T-cell (primary cell): ENCODE measurements at regions of chr2 and their contacts with region 1.

Region 1: DNA sequence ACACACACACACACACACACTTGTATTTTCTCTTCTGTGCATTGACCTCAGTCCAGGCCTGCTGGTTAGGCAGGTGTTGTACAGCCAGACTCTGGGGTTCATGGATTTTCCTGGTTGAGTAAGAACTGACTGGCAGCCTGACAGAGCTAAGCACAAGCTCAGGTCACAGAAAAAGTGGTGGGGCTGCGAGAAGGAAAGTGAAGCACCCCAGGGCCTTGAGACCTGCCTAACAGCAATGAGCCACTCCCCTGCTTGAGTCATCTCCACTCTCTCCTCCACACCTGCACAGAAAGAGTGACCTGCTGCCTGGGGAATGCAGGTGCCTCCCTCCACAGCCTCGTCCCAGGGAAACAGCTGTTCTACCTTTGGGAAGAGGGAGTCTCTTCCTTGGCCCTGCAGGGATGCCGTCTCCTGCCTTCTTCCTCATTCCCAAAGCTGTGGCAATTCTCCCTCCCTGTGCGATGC is 91.4 kb upstream of the LGALSL start:
- DNase-seq: no peak
- ATAC-seq: no peak
- H3K4me3 ChIP-seq: no peak overlapping the region
- H3K4me3 Mint-ChIP-seq: no peak overlapping the region
- H3K27ac ChIP-seq: no peak overlapping the region
- H3K27ac Mint-ChIP-seq: no peak overlapping the region
- H3K4me1 ChIP-seq: no peaks in the 10 kb centered on the region
- H3K4me1 Mint-ChIP-seq: no peaks in the 10 kb centered on the region
- H3K27me3 ChIP-seq: peaks cover 0 to 32% of the 10 kb centered on the region in 2 experiments
- H3K27me3 Mint-ChIP-seq: peaks cover 7 to 13% of the 10 kb centered on the region in 2 donors

Region 2: DNA sequence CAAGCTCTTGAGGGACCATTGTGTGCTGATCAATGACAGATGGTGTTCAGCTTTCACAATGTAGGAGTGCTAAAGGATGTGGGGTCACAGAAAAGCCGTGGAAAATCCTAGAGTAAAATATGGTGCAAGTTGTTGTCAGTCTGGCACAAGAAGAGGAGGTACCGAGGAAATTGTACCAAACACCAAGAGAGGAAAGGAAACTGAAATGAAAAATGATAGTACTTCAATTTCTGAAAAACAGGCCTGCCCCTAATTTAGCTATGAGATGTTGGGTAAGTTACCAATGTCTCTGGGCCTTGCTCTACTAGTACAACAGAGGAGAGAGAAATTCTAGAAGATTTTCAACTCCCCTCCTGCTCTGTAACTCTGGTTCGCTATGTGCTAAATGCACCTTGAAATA is 139.5 kb before region 1 on chr2:
- CTCF ChIA-PET with region 1: no interaction called
- POLR2A ChIA-PET with region 1: interaction called in 1 of 2 experiments, 12 read pairs
- DNase-seq: peak in 1 of 35 experiments; percentile 16
- ATAC-seq: peak; percentile 30 to 50 (median 37)
- H3K4me3 ChIP-seq: no peak overlapping the region
- H3K4me3 Mint-ChIP-seq: peak overlapping the region in 1 of 3 donors; percentile 43
- H3K27ac ChIP-seq: peak overlapping the region; percentile 28
- H3K27ac Mint-ChIP-seq: peak overlapping the region; percentile 77 to 91
- H3K4me1 ChIP-seq: peaks cover 10 to 21% of the 10 kb centered on the region in 2 experiments
- H3K4me1 Mint-ChIP-seq: peaks cover 39 to 54% (median 51%) of the 10 kb centered on the region in 3 donors
- H3K27me3 ChIP-seq: peaks cover 0 to under 1% of the 10 kb centered on the region in 2 experiments
- H3K27me3 Mint-ChIP-seq: no peaks in the 10 kb centered on the region